Colonic mucosa (tissue), 4 donors: ENCODE measurements at regions of chr1 and their contacts with region 1.

Region 1: DNA sequence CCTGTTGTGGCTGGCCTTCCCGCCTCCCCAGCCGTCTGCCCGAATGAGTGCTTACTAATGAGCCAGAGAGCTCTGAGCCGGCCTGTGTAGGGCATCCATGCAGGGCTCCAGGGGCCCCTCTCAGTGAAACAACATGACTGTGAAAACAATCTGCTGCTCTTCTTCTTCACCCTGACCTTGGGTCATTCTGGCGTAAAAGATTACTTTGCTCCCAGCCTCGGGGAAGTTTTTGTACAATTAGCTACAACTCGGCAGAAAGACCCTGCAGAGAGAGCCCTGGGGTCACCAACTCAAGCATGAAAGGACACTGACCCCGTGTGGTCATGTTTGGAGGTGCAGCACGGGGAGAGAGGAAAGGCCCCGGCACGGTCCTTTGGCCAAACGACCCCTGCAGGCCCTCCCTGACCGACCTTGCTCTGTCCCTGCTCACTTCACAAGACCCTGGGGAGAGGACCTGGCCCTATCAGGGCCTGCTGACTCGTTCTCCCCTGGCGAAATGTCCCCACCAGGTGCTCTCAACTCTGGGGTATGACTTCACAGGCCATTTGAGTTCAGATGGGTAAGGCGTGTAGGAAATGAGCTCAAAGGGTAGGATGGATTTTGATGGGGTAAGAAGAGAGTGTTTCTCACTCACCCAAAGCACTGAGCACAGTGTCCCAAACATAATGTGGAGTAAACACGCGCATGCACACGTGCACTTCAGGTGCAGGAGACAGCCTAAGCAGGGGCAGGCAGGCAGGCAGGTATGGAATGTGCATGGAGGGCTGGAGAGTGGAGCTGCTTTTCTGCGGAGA is 22.9 kb upstream of the FAM20B start:
- DNase-seq: peak; percentile 87
- H3K4me3 ChIP-seq: no peak overlapping the region
- H3K27ac ChIP-seq: peak overlapping the region; percentile 19
- H3K4me1 ChIP-seq: no peaks in the 10 kb centered on the region
- H3K27me3 ChIP-seq: no peaks in the 10 kb centered on the region
- CTCF ChIP-seq: peak; percentile 97

Region 2: DNA sequence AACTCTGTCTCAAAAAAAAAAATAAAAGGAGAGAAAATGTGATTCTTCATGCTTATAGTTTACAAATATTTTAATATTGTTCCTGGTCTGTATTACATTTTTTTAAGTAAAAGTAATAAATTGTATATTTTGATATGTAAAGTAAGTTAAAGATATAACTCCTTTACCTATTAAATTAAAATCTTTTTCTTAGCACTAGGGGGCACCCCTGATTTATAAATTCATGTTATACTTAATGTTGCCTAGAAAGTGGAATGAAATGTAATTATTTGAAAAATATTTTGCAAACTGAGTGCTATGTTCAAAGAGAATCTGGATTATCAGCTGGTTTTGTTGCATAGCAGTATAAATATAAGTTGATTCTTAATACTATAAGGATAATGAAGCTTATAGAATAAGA is 228.5 kb before region 1 on chr1:
- intact Hi-C with region 1: loop called (anchors 5 kb)
- DNase-seq: no peak
- H3K4me3 ChIP-seq: no peak overlapping the region
- H3K27ac ChIP-seq: no peak overlapping the region
- H3K4me1 ChIP-seq: no peaks in the 10 kb centered on the region
- H3K27me3 ChIP-seq: no peaks in the 10 kb centered on the region
- CTCF ChIP-seq: no peak

Region 3: GRCh38 chr1:179129702-179130473 is 127.1 kb after region 1 on chr1:
- intact Hi-C with region 1: no loop called
- DNase-seq: no peak
- H3K4me3 ChIP-seq: no peak overlapping the region
- H3K27ac ChIP-seq: peak overlapping the region; percentile 32
- H3K4me1 ChIP-seq: no peaks in the 10 kb centered on the region
- H3K27me3 ChIP-seq: no peaks in the 10 kb centered on the region
- CTCF ChIP-seq: no peak